CD4-positive, alpha-beta T cell (primary cell): ENCODE measurements at regions of chr21 and their contacts with region 1.

Region 1: GRCh38 chr21:42424914-42425541 is 21.3 kb downstream of the UBASH3A start:
- DNase-seq: peak; percentile 63 to 92 (median 76)
- ATAC-seq: peak; percentile 86
- H3K4me3 ChIP-seq: peak overlapping the region; percentile 13
- H3K4me3 Mint-ChIP-seq: peak overlapping the region; percentile 59
- H3K27ac ChIP-seq: peak overlapping the region; percentile 78 to 90
- H3K27ac Mint-ChIP-seq: peak overlapping the region; percentile 85
- H3K4me1 ChIP-seq: peaks cover 83% of the 10 kb centered on the region
- H3K4me1 Mint-ChIP-seq: peaks cover 79% of the 10 kb centered on the region
- H3K27me3 ChIP-seq: no peaks in the 10 kb centered on the region
- H3K27me3 Mint-ChIP-seq: no peaks in the 10 kb centered on the region
- CTCF ChIP-seq: no peak

Region 2: DNA sequence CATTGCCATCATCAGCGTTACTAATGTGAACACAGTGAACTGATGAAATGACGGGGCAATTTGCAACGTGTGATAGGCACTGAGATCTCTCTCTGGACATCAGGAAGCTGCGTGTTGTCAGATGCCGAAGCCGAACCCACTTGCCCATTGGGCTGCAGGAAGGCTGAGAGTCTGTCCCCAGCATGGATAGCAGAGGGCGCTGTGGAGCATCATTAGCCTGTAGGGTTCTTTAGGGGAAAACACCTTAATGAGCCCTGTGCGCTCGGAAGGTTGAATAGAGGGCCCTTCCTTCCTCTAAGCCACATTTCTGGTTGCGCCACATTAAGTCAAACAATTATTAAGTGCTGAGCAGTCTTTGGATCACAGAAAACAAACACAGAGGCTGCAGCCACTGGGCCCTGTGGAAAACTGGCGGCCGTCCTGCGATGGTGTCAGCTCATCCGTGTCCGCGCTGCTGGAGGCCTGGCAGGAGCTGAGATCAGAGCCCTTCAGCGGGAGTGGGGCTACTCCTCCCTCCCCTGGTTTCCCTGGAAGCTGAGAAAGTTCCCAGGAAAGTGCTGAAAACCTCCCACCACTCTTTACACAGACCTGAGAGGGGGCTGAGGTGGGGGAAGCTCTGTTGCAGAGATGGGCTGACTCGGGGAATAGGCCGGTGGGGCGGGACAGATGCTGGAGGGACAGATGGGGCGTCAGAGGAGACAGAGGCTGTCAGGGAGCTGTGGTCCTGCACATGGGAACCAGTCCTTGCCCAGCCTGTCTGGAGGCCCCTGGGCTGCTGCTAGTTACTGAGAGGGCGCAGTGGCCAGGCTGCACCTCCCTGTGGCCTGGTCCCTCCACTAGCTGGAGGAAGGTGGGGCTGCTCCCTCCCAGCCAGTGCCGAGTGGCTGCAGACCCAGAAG is 86.9 kb before region 1 on chr21:
- CTCF ChIA-PET with region 1: interaction called, 7 read pairs
- POLR2A ChIA-PET with region 1: no interaction called
- intact Hi-C with region 1: loop called in 1 of 2 experiments (anchors 1 kb)
- DNase-seq: peak; percentile 74 to 93 (median 82)
- ATAC-seq: peak; percentile 100
- H3K4me3 ChIP-seq: no peak overlapping the region
- H3K4me3 Mint-ChIP-seq: no peak overlapping the region
- H3K27ac ChIP-seq: no peak overlapping the region
- H3K27ac Mint-ChIP-seq: peak overlapping the region; percentile 28
- H3K4me1 ChIP-seq: peaks cover 9% of the 10 kb centered on the region
- H3K4me1 Mint-ChIP-seq: peaks cover 8% of the 10 kb centered on the region
- H3K27me3 ChIP-seq: peaks cover 0 to 3% of the 10 kb centered on the region in 2 experiments
- H3K27me3 Mint-ChIP-seq: no peaks in the 10 kb centered on the region
- CTCF ChIP-seq: peak; percentile 87

Region 3: DNA sequence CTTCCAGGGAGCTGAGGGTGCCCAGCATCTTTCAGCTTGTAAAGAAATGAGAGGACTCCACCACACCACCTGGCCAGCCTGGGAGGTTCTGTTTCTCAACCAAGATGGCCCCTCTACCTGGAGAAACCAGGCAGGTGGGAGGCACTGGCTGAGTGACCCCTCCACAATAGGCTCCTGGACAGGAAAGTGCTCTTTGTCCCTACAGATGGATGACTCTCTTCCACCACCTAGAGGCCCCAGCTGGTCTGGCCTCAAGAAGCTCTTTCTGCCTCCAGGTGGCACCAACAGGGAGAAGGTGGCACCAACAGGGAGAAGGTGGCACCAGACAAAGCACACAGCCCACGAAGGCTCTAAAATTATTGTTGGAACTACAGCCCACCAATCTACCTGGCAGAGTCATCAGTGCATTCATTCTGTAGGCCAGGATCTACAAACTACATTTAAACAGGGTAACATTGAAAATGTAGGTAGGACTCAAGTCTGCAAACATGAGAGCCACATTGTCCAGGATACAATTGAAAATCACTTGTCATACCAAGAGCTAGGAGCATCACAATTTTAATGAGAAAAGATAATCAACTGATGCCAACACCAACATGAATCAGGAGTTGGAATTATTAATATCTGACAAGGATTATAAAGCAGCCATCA is 43.6 kb before region 1 on chr21:
- CTCF ChIA-PET with region 1: interaction called, 3 read pairs
- POLR2A ChIA-PET with region 1: interaction called, 3 read pairs
- intact Hi-C with region 1: loop called in 1 of 2 experiments (anchors 10 kb)
- DNase-seq: peak in 10 of 14 experiments; percentile 24 to 70 (median 38)
- ATAC-seq: peak; percentile 56
- H3K4me3 ChIP-seq: no peak overlapping the region
- H3K4me3 Mint-ChIP-seq: no peak overlapping the region
- H3K27ac ChIP-seq: no peak overlapping the region
- H3K27ac Mint-ChIP-seq: no peak overlapping the region
- H3K4me1 ChIP-seq: peaks cover 15% of the 10 kb centered on the region
- H3K4me1 Mint-ChIP-seq: peaks cover 20% of the 10 kb centered on the region
- H3K27me3 ChIP-seq: no peaks in the 10 kb centered on the region
- H3K27me3 Mint-ChIP-seq: no peaks in the 10 kb centered on the region
- CTCF ChIP-seq: peak; percentile 42

Region 4: DNA sequence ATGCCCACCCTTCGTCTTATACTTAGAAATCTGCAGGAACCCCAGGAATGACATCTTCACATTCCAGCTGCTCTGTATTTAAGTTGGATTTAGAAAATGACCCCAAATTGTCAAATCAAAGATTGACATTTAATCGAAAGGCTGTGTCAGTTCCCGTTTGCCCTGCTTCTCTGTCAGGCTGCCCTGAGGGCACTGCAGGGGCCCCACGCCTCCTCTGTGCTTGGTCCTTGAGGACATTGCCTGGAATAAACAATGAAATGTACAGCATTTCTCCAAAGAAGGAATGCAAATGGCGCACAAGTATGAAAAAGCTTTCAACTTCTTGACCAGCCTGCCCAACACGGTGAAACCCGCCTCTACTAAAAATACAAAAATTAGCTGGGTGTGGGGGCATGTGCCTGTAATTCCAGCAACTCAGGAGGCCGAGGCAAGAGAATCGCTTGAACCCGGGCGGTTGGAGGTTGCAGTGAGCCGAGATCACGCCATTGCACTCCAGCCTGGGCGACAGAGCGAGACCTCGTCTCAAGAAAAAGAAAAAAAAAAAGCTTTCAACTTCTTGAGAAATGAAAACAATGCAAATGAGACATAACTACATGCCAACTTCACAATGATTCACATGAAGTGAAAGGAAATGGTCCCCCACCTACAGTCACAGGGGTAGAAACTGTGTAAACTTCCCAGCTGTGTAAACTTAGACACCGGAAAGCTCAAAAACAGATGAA is 32.1 kb before region 1 on chr21:
- CTCF ChIA-PET with region 1: interaction called, 4 read pairs
- POLR2A ChIA-PET with region 1: interaction called, 15 read pairs
- intact Hi-C with region 1: loop called in 1 of 2 experiments (anchors 5 kb)
- DNase-seq: peak in 4 of 14 experiments; percentile 53 to 66 (median 58)
- ATAC-seq: peak; percentile 90
- H3K4me3 ChIP-seq: peak overlapping the region; percentile 17
- H3K4me3 Mint-ChIP-seq: peak overlapping the region; percentile 64
- H3K27ac ChIP-seq: no peak overlapping the region
- H3K27ac Mint-ChIP-seq: peak overlapping the region; percentile 52
- H3K4me1 ChIP-seq: peaks cover 37% of the 10 kb centered on the region
- H3K4me1 Mint-ChIP-seq: peaks cover 63% of the 10 kb centered on the region
- H3K27me3 ChIP-seq: no peaks in the 10 kb centered on the region
- H3K27me3 Mint-ChIP-seq: no peaks in the 10 kb centered on the region
- CTCF ChIP-seq: no peak

Region 5: GRCh38 chr21:42406201-42406621 is 18.8 kb before region 1 on chr21:
- CTCF ChIA-PET with region 1: interaction called, 9 read pairs
- POLR2A ChIA-PET with region 1: interaction called, 208 read pairs
- intact Hi-C with region 1: loop called (anchors 1 to 2 kb)
- DNase-seq: peak in 13 of 14 experiments; percentile 21 to 86 (median 41)
- ATAC-seq: peak; percentile 53
- H3K4me3 ChIP-seq: peak overlapping the region; percentile 78
- H3K4me3 Mint-ChIP-seq: peak overlapping the region; percentile 92
- H3K27ac ChIP-seq: peak overlapping the region; percentile 79 to 85
- H3K27ac Mint-ChIP-seq: peak overlapping the region; percentile 96
- H3K4me1 ChIP-seq: peaks cover 70% of the 10 kb centered on the region
- H3K4me1 Mint-ChIP-seq: peaks cover 72% of the 10 kb centered on the region
- H3K27me3 ChIP-seq: no peaks in the 10 kb centered on the region
- H3K27me3 Mint-ChIP-seq: no peaks in the 10 kb centered on the region
- CTCF ChIP-seq: no peak

Region 6: GRCh38 chr21:42956819-42957632 is 532.0 kb after region 1 on chr21:
- CTCF ChIA-PET with region 1: no interaction called
- POLR2A ChIA-PET with region 1: no interaction called
- intact Hi-C with region 1: no loop called
- DNase-seq: no peak
- ATAC-seq: peak; percentile 60
- H3K4me3 ChIP-seq: no peak overlapping the region
- H3K4me3 Mint-ChIP-seq: no peak overlapping the region
- H3K27ac ChIP-seq: no peak overlapping the region
- H3K27ac Mint-ChIP-seq: no peak overlapping the region
- H3K4me1 ChIP-seq: no peaks in the 10 kb centered on the region
- H3K4me1 Mint-ChIP-seq: no peaks in the 10 kb centered on the region
- H3K27me3 ChIP-seq: no peaks in the 10 kb centered on the region
- H3K27me3 Mint-ChIP-seq: no peaks in the 10 kb centered on the region
- CTCF ChIP-seq: no peak